ENCODE measurements at regions of chr1 and their contacts with region 1.

Region 1: GRCh38 chr1:204530932-204531331 is 14.7 kb downstream of the MDM4 start:
- DNase-seq: no peak
- H3K4me3 Mint-ChIP-seq: no peak overlapping the region
- H3K27ac Mint-ChIP-seq: no peak overlapping the region
- H3K4me1 Mint-ChIP-seq: no peaks in the 10 kb centered on the region
- H3K27me3 Mint-ChIP-seq: no peaks in the 10 kb centered on the region
- CTCF ChIP-seq: no peak

Region 2: DNA sequence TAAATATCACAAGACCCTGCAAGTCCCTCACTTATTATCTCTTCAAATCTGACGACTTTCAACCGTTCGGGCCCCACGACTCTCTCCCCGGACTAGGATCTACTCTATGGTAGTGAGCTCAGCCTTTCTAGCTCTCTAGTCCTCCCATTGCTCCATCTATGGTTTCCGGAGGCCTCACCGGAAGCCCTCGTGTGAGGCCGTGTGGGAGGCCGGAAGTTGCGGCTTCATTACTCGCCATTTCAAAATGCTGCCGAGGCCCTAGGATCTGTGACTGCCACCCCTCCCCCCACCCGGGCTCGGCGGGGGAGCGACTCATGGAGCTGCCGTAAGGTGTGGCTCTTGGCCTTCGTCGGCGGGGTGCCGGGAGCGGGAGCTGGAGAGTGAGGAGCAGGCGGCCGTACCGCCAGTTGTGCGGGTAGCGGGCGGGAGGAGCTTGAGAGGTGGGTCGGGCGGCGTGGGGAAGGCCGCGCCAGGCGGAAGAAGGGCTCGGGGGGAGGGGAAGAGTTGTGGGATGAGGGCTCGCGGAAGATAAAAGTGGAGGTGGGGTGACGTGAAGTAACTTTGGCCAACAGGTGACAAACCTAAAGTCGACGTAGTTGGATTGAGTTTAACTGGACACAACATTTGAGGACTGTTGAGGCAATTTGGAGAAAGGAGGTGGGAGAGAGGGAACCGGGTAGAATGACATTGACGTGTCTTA is 14.6 kb before region 1 on chr1 and contains the start of gene MDM4:
- CTCF ChIA-PET with region 1: interaction called, 4 read pairs
- POLR2A ChIA-PET with region 1: interaction called, 99 read pairs
- intact Hi-C with region 1: no loop called
- DNase-seq: peak; percentile 100
- H3K4me3 Mint-ChIP-seq: no peak within 1 kb of the TSS
- H3K27ac Mint-ChIP-seq: no peak within 1 kb of the TSS
- H3K4me1 Mint-ChIP-seq: peaks cover 12% of the 10 kb centered on the region
- H3K27me3 Mint-ChIP-seq: no peaks in the 10 kb centered on the region
- CTCF ChIP-seq: no peak
- total RNA-seq, gene MDM4: 162 and 174 TPM in 2 replicates